Left ventricle myocardium superior (tissue), 1 donor: ENCODE measurements at regions of chr2 and their contacts with region 1.

Region 1: DNA sequence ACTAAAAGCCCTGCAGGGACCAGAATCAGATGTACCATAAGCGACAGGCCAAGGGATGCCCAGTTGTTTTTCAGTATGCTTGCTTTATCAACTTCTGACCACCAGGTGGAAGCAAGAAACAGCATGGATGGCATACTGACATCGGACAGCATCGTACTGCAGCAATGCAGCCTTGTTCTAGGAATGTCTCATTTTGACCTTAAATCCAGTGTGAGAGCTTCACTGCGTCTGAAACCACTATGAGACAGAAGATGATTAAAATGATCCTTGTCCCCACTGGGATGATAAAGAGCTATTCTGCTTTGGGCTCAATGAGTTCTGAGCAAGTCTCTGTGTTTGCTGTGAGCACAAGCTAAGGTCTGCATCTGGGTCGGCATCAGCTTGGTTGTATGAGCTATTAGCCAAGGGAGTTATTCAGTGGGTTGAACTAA is 54.3 kb downstream of the CDK15 start:
- DNase-seq: no peak
- ATAC-seq: peak; percentile 89

Region 2: DNA sequence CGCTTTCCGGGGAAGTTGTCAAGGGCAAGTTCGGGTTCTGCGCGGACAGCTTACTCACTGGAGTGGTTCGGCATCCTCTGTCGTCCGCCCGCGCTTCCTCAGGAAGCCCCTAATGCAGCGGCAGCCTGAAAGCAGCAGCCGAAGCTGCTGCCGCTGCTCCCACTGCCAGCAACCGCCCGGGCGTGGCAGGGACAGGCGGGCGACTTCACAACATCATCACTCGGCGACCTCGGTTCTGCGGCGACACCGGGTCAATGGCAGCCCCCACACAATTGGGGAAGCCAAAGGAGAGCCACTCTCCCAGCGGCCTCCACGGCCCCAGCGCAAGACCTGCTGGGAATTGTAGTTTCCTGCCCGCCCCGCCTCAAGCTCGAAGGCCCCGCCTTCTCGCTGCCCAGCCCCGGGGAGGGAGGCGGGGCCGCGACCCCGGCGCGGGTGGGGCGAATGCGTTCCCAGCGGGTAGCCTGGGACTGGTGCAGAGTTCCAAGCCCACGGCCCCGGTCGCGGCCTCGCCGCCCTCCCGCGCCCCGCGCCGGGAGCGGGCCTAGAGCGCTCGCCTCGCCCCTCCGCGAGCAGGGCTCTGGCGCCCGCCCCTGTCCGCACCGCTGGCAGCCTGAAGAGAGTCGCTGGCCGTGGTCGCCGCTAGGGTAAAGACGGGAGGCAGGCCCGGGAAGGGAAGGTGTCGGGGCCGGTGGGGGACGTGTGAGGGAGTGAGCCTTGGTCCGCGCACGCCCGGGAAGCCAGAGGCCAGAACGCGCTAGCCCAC is 409.2 kb before region 1 on chr2 and contains the starts of genes STRADB and TRAK2:
- intact Hi-C with region 1: no loop called
- DNase-seq: peak; percentile 97
- ATAC-seq: peak; percentile 97
- total RNA-seq, gene STRADB: 81.4 TPM
- total RNA-seq, gene TRAK2: 202 TPM

Region 3: DNA sequence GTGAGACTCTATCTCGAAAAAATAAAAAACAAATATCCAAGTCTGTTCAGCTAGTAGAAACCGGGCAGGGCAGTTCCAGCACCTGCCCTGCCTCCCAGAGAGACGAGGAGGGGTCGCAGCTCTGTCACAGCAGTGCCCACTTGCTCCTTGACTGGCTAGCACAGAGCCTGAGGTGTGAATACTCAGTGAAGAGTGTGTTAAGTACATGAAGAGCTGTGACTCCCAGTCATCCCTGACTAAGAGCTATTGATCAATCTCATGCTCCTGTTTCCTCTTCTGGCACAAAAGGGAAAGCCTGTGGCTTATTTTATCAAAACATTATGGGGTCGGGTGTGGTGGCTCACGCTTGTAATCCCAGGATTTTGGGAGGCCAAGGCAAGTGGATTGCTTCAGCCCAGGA is 90.0 kb after region 1 on chr2:
- intact Hi-C with region 1: no loop called
- DNase-seq: no peak
- ATAC-seq: no peak

Region 4: DNA sequence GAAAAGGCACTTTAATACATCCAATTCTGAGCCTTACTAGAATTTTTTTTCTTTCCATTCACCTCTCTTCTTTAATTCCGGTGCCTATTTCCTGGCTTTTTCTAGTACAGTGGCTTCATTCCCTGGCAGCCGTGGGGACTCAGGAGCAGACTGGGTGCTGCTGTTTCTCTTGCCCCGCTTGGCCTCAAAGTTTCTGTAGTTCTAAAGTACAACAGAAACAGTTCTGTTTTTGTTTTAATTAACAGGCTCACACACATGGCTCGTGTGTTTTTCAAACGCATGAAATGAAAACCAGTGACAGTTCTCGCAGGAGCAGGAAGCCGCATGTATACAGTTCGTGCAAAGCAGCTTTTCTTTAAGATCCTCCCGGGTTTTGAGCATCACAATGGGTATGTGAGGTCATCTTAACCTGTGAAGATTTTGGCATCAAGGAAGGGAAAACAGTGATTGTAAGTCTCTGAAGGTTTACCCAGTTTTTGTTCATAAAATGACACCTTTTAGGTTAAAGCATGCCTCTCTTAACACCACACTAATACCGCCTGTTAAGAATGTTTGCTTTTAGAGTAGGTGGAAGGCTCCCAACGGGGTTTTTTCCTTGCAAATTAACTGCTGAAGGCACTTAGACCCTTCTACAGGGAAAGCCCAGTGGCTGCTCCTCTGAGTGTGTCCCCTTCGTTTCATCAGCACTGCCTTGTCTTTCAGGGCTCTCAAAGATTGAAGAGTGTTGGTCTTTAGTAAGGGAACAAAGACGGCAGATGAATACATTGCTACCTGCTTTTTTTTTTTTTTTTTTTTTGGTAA is 178.8 kb after region 1 on chr2:
- intact Hi-C with region 1: loop called (anchors 10 kb)
- DNase-seq: no peak
- ATAC-seq: no peak

Region 5: GRCh38 chr2:202178342-202178958 is 317.8 kb after region 1 on chr2:
- intact Hi-C with region 1: loop called (anchors 2 kb)
- DNase-seq: no peak
- ATAC-seq: peak; percentile 80